Endothelial cell of umbilical vein (primary cell): ENCODE measurements at regions of chr9 and their contacts with region 1.

Region 1: DNA sequence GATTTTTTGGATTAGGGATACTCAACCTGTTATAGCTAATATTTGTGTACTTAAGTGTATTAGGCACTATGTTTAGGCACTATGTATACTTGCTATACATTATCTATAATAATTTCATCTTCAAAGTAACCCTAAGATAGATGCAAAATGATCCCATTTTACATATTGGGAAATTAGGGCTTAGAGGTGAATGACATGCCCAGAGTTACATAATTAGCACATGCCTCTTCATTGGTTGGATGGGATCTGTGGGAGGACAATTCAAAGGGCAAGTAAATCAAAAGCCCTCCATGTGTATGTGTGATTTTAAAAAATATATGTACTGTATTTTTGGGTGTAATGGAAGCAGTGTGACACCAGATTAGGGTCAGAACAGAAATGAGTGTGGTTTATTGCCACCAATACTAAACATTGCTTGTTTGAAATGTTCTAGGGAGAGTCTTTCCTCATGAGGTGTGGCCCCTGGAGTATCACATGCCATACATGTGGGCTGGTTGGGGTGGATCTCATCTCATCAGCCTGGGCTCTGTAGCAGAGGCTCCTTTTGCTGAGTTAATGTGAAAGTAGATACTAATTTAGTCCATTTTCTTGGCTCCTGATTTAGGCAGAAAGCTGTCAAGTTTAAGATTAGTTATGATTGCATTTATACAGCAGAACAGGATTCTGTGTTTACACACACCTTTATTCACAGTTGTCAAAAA is 5.5 kb downstream of the C9orf85 start:
- DNase-seq: no peak
- H3K4me3 ChIP-seq: no peak overlapping the region
- H3K27ac ChIP-seq: no peak overlapping the region
- H3K4me1 ChIP-seq: peaks cover 12% of the 10 kb centered on the region
- H3K27me3 ChIP-seq: no peaks in the 10 kb centered on the region
- CTCF ChIP-seq: no peak
- POLR2A ChIP-seq: no peak

Region 2: DNA sequence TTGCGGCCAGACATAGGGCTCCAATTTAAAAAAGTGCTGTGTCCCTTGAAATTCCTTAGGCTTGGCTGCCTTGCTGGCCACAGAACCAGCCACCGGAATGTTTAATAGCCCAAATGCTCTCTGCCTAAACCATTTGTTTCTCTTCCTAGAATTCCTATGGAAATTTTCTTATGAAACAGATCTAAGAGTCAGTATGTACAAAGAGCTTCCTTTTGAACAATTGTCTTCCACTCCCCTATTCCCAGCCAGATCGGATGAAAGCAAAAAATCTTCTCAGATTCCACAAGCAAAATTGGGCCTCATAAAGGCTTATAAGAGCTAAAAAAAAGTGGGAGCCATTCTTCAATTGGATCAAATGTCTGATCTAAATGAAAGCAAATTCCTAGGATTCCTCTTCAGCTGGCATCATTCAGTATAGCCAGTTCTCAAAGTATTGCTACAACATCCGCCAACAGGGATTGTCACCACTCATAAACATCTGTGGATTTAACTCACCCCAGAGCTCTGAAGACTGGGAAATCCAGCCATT is 253.0 kb before region 1 on chr9:
- CTCF ChIA-PET with region 1: no interaction called
- POLR2A ChIA-PET with region 1: no interaction called
- dilution Hi-C with region 1: no loop called
- intact Hi-C with region 1: no loop called
- DNase-seq: no peak
- H3K4me3 ChIP-seq: no peak overlapping the region
- H3K27ac ChIP-seq: no peak overlapping the region
- H3K4me1 ChIP-seq: no peaks in the 10 kb centered on the region
- H3K27me3 ChIP-seq: no peaks in the 10 kb centered on the region
- CTCF ChIP-seq: no peak
- POLR2A ChIP-seq: no peak

Region 3: DNA sequence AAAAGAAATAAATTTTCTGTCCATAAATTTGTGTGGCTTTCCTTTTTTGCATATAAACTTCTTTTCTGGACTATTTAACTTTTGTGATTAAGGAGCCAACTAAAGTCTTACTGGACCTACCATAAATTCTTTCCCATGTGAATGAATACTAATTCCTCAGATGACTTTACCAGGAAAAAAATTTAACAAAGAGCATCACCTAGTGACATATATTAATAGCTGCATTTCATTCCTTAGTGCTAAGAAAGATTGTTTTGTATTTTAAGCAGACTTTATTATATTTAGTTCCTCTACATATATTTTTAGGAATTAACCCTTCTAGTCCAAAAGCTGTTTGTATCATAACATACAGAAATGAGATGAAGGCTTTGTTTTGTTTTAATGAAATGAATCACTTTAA is 58.8 kb after region 1 on chr9:
- CTCF ChIA-PET with region 1: no interaction called
- POLR2A ChIA-PET with region 1: no interaction called
- dilution Hi-C with region 1: no loop called
- intact Hi-C with region 1: no loop called
- DNase-seq: no peak
- H3K4me3 ChIP-seq: no peak overlapping the region
- H3K27ac ChIP-seq: no peak overlapping the region
- H3K4me1 ChIP-seq: no peaks in the 10 kb centered on the region
- H3K27me3 ChIP-seq: no peaks in the 10 kb centered on the region
- CTCF ChIP-seq: no peak
- POLR2A ChIP-seq: no peak

Region 4: GRCh38 chr9:71987471-71988391 is 70.7 kb after region 1 on chr9:
- CTCF ChIA-PET with region 1: no interaction called
- POLR2A ChIA-PET with region 1: no interaction called
- dilution Hi-C with region 1: no loop called
- intact Hi-C with region 1: loop called (anchors 2 kb)
- DNase-seq: no peak
- H3K4me3 ChIP-seq: no peak overlapping the region
- H3K27ac ChIP-seq: no peak overlapping the region
- H3K4me1 ChIP-seq: no peaks in the 10 kb centered on the region
- H3K27me3 ChIP-seq: no peaks in the 10 kb centered on the region
- CTCF ChIP-seq: no peak
- POLR2A ChIP-seq: no peak

Region 5: DNA sequence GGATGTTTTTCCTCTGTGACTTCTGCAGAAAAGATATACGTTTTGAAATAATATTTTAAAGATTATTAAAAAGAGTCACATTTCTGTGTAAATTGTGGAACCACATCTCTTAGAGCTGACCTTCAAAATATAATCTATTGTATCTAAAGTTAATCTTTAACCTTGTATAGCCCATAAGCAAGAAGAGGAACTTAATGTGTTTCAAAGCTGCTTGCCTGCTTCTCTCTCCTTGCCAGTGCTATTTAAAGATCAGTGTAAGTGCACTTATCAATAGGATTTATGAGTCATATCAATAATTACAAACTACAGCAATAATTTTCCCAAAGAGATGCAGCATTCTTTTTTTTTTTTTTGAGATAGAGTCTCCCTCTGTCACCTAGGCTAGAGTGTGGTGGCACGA is 202.9 kb after region 1 on chr9:
- CTCF ChIA-PET with region 1: no interaction called
- POLR2A ChIA-PET with region 1: no interaction called
- dilution Hi-C with region 1: no loop called
- intact Hi-C with region 1: no loop called
- DNase-seq: no peak
- H3K4me3 ChIP-seq: no peak overlapping the region
- H3K27ac ChIP-seq: no peak overlapping the region
- H3K4me1 ChIP-seq: no peaks in the 10 kb centered on the region
- H3K27me3 ChIP-seq: no peaks in the 10 kb centered on the region
- CTCF ChIP-seq: no peak
- POLR2A ChIP-seq: no peak

Region 6: DNA sequence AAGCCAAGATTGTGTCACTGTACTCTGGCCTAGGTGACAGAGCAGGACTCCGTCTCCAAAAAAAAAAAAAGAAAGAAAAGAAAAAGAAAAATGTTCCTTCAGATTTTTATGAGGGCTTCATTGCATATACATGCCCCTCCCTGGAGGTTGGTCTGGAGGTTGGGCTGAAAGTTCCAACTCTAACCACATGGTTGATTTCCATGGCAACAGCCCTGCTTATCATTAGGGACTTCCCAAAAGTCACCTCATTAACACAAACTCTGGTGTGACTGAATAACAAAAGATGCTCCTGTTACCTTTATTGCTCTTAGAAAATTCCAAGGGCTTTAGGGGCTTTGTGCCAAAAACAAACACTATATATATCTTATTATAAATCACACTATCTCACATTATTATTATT is 718.2 kb after region 1 on chr9:
- CTCF ChIA-PET with region 1: no interaction called
- POLR2A ChIA-PET with region 1: no interaction called
- dilution Hi-C with region 1: no loop called
- intact Hi-C with region 1: no loop called
- DNase-seq: no peak
- H3K4me3 ChIP-seq: no peak overlapping the region
- H3K27ac ChIP-seq: no peak overlapping the region
- H3K4me1 ChIP-seq: no peaks in the 10 kb centered on the region
- H3K27me3 ChIP-seq: no peaks in the 10 kb centered on the region
- CTCF ChIP-seq: no peak
- POLR2A ChIP-seq: no peak